PC-9 (cell line): ENCODE measurements at regions of chr6 and their contacts with region 1.

Region 1: GRCh38 chr6:71496018-71496721 is 207.6 kb downstream of the OGFRL1 start:
- DNase-seq: no peak
- H3K4me3 ChIP-seq: no peak overlapping the region
- H3K27ac ChIP-seq: no peak overlapping the region
- H3K4me1 ChIP-seq: peaks cover 20% of the 10 kb centered on the region; the same call in 1 of the 2 replicates
- H3K27me3 ChIP-seq: no peaks in the 10 kb centered on the region
- CTCF ChIP-seq: no peak

Region 2: DNA sequence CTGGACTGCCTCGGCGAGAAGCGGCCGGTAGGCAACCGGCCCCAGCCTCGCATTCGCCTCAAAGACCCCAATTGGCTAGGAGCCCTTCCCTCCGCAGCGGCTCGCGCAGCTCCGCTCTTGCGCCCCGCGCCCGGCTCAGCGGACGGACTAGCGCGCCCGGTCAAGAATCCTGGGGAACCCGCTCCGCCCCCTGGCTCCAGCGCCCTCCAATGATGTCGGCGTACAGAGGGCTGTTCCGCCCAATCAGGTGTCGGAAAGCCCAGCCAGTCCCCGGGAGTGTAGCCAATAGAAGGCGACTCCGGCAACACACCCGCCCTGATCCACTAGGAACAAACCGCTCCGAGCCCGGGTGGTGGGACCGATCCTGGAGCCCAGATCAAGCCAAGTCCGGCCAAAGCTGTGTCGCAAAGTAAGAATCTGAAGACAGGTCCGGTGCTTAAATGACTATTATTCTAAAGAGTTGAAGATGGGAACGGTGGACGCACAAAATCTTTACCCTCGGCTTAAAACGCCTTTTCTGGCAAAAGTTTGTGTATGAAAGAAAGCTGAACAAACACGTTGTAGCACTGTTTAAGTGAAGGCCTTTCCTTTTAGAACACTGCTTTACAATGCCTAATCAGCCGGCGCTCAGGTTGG is 75.4 kb before region 1 on chr6:
- CTCF ChIA-PET with region 1: no interaction called
- POLR2A ChIA-PET with region 1: interaction called, 5 read pairs
- intact Hi-C with region 1: loop called (anchors 5 kb)
- DNase-seq: peak; percentile 89 to 96
- H3K4me3 ChIP-seq: peak overlapping the region; percentile 81
- H3K27ac ChIP-seq: peak overlapping the region; percentile 48
- H3K4me1 ChIP-seq: peaks cover 30% of the 10 kb centered on the region
- H3K27me3 ChIP-seq: no peaks in the 10 kb centered on the region
- CTCF ChIP-seq: no peak